ENCODE measurements at regions of chr3 and their contacts with region 1.

Region 1: DNA sequence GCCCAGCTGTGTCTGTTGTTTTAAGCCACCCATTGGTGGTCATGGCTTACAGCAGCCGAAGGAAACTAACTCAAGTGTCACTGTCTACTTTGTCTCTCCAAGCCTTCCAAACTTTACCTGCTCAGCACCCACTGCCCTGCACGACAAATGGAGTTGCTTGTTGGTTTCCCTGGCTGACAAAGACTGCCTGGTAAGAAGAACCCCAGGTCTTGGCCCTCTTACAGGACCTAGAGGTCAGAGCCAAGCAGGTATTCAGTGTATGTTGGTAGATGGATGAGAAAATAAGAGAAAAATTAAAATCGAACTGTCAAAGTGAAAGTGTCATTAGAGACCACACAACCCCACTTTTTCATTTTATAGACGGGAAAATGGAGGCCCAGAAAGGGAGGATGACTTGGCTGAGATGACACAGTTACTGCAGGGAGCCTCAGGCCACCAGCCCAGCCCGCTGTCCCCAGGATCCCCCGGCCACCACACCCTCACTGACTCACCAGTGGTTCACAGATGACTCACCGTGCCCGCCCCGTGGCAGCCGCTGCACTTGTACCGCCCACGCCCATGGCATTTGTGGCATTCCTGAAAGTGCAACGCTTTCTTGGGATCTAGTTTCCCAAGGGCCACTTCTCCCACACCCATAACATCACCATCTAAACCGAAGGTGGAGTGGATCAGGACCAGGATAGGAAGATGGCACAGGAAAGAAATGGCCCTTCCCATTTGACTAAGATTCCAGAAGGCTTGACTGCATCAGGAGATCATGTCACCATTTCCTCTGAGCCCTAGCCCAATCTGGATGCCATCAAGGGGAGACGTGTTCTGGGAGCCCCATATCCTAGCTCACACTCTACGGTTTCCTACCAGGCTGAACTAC is 15.2 kb downstream of the SSUH2 start:
- DNase-seq: peak; percentile 97
- ATAC-seq: peak; percentile 92
- H3K4me3 ChIP-seq: no peak overlapping the region
- H3K27ac ChIP-seq: peak overlapping the region; percentile 91
- H3K4me1 ChIP-seq: peaks cover 38% of the 10 kb centered on the region
- H3K27me3 ChIP-seq: no peaks in the 10 kb centered on the region
- CTCF ChIP-seq: no peak

Region 2: GRCh38 chr3:8490079-8490552 is 139.3 kb before region 1 on chr3:
- CTCF ChIA-PET with region 1: no interaction called
- POLR2A ChIA-PET with region 1: no interaction called
- intact Hi-C with region 1: no loop called
- DNase-seq: peak; percentile 61
- ATAC-seq: no peak
- H3K4me3 ChIP-seq: no peak overlapping the region
- H3K27ac ChIP-seq: peak overlapping the region; percentile 38
- H3K4me1 ChIP-seq: peaks cover 29% of the 10 kb centered on the region
- H3K27me3 ChIP-seq: no peaks in the 10 kb centered on the region
- CTCF ChIP-seq: no peak

Region 3: GRCh38 chr3:8509961-8510360 is 119.4 kb before region 1 on chr3:
- CTCF ChIA-PET with region 1: no interaction called
- POLR2A ChIA-PET with region 1: no interaction called
- intact Hi-C with region 1: loop called (anchors 5 kb)
- DNase-seq: peak; percentile 73
- ATAC-seq: peak; percentile 43
- H3K4me3 ChIP-seq: no peak overlapping the region
- H3K27ac ChIP-seq: peak overlapping the region; percentile 28; the same call in 1 of the 2 replicates
- H3K4me1 ChIP-seq: peaks cover 40% of the 10 kb centered on the region
- H3K27me3 ChIP-seq: no peaks in the 10 kb centered on the region
- CTCF ChIP-seq: no peak

Region 4: GRCh38 chr3:8579096-8579495 is 50.3 kb before region 1 on chr3:
- CTCF ChIA-PET with region 1: no interaction called
- POLR2A ChIA-PET with region 1: no interaction called
- intact Hi-C with region 1: no loop called
- DNase-seq: no peak
- ATAC-seq: no peak
- H3K4me3 ChIP-seq: no peak overlapping the region
- H3K27ac ChIP-seq: no peak overlapping the region
- H3K4me1 ChIP-seq: 0 out of 2 replicates have a peak, but pooled peaks cover 5% of the 10 kb centered on the region
- H3K27me3 ChIP-seq: no peaks in the 10 kb centered on the region
- CTCF ChIP-seq: no peak

Measured in PC-3 (cell line).